Activated naive CD4-positive, alpha-beta T cell treated with anti-CD3 and anti-CD28 coated beads for 36 hours (primary cell): ENCODE measurements at regions of chr3 and their contacts with region 1.

Region 1: DNA sequence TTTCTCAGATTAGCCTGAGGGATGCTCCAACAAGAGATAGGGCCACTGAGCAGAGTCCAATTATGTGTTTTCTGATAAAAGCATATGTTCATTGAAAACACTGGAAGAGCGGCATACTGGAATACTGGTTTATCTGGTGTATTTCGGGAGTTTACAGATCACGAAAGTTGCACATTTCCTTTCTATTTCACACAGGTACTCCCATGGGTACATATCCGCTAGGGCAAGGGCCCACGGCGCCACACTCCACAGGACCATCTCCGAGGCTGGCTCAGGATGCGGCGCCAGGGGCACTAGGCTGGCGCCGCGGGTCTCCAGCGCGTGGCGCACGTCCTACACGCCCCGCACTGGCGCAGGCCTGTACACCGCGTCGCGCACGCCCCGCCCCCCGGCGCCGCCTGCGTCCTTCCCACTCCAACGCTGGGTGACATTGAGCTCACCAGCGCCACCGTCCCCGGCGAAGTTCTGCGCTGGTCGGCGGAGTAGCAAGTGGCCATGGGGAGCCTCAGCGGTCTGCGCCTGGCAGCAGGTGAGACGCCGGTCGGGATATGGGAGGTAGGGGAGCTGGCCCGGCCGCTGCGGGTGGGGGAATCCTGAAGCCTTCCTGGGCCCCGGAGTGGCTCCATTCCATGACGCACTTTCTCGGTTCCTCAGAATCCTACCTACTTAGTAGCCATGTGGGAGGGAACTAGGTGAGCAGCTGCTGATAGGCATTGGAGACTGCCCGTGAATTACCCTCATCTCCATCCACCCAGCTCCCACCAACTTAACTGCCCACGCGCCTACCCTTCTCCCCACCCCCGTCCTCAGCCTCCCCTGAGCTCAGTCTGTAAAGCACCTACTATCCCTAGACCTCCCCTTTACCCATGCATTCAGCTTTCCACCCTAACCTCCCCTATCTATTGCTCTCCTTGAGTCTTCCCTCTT is at the start of gene FAM162A:
- DNase-seq: peak; percentile 93
- H3K4me3 Mint-ChIP-seq: peak within 1 kb of the TSS; percentile 90
- H3K27ac Mint-ChIP-seq: peak within 1 kb of the TSS; percentile 93
- H3K4me1 Mint-ChIP-seq: peaks cover 62% of the 10 kb centered on the region
- H3K27me3 Mint-ChIP-seq: no peaks in the 10 kb centered on the region
- total RNA-seq, gene FAM162A: 111 to 112 TPM

Region 2: GRCh38 chr3:121749276-121750086 is 634.6 kb before region 1 on chr3 and contains the start of gene GOLGB1:
- CTCF ChIA-PET with region 1: no interaction called
- intact Hi-C with region 1: loop called (anchors 1 kb)
- DNase-seq: peak; percentile 97
- H3K4me3 Mint-ChIP-seq: no peak within 1 kb of the TSS
- H3K27ac Mint-ChIP-seq: no peak within 1 kb of the TSS
- H3K4me1 Mint-ChIP-seq: peaks cover 5% of the 10 kb centered on the region
- H3K27me3 Mint-ChIP-seq: no peaks in the 10 kb centered on the region
- total RNA-seq, gene GOLGB1: 18.2 to 19.7 TPM

Region 3: GRCh38 chr3:122305818-122306621 is 78.0 kb before region 1 on chr3:
- CTCF ChIA-PET with region 1: interaction called, 5 read pairs
- intact Hi-C with region 1: loop called (anchors 1 kb)
- DNase-seq: peak; percentile 32
- H3K4me3 Mint-ChIP-seq: no peak overlapping the region
- H3K27ac Mint-ChIP-seq: no peak overlapping the region
- H3K4me1 Mint-ChIP-seq: no peaks in the 10 kb centered on the region
- H3K27me3 Mint-ChIP-seq: peaks cover 1% of the 10 kb centered on the region

Region 4: DNA sequence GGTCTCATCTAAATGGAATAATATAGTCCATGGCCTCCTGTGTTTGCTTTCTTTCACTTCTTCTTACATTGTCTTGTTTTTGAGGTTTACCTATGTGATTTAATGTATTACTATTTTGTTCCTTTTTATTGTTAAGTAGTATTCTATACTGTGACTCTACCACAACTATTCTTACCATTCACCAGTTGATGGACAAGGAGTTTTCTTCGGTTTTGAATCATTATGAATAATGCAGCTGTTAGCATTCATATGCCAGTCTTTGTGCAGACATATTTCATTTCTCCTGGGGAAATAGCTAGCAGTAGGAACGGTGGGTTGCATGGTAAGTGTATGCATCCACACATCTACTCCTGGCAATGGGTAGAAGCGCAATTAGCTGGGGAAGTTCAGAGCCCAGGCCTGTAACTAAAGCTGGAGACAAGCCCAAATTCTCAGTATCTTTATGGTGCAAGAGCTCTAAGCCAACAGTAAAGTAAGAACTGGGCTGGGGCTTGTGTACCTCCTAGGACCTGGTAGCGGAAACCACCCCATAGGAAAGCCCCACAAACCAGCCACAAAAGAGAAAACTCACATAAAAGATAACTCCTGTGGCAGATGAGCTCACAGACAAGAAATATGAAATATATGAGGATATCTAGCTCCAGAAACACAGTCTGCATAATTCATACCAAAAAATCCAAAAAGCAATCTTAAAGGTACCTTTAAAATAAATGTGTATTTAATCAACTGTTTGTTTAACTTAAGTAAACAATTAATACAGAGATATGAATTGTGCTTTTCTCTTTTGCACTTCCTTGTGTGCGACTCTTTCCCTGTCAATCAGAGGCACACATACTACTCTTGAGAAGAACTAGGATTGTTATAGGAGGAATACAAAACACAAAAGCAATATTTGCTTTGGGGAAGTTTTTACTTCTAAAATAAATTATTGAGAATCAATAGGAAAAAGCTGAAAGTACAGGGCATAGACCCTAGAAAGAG is 61.6 kb before region 1 on chr3:
- CTCF ChIA-PET with region 1: no interaction called
- intact Hi-C with region 1: loop called (anchors 2 kb)
- DNase-seq: peak; percentile 73
- H3K4me3 Mint-ChIP-seq: no peak overlapping the region
- H3K27ac Mint-ChIP-seq: peak overlapping the region; percentile 77
- H3K4me1 Mint-ChIP-seq: peaks cover 22% of the 10 kb centered on the region
- H3K27me3 Mint-ChIP-seq: no peaks in the 10 kb centered on the region

Region 5: GRCh38 chr3:122365073-122365472 is 19.0 kb before region 1 on chr3:
- CTCF ChIA-PET with region 1: interaction called, 3 read pairs
- intact Hi-C with region 1: loop called (anchors 1 kb)
- DNase-seq: no peak
- H3K4me3 Mint-ChIP-seq: no peak overlapping the region
- H3K27ac Mint-ChIP-seq: peak overlapping the region; percentile 70
- H3K4me1 Mint-ChIP-seq: peaks cover 17% of the 10 kb centered on the region
- H3K27me3 Mint-ChIP-seq: no peaks in the 10 kb centered on the region

Region 6: GRCh38 chr3:122458992-122459391 is 75.0 kb after region 1 on chr3:
- CTCF ChIA-PET with region 1: no interaction called
- intact Hi-C with region 1: no loop called
- DNase-seq: no peak
- H3K4me3 Mint-ChIP-seq: no peak overlapping the region
- H3K27ac Mint-ChIP-seq: no peak overlapping the region
- H3K4me1 Mint-ChIP-seq: peaks cover 8% of the 10 kb centered on the region
- H3K27me3 Mint-ChIP-seq: no peaks in the 10 kb centered on the region

Region 7: GRCh38 chr3:122793568-122794416 is 409.8 kb after region 1 on chr3 and contains the start of gene HSPBAP1:
- CTCF ChIA-PET with region 1: no interaction called
- intact Hi-C with region 1: loop called (anchors 2 kb)
- DNase-seq: peak; percentile 92
- H3K4me3 Mint-ChIP-seq: peak within 1 kb of the TSS; percentile 86
- H3K27ac Mint-ChIP-seq: peak within 1 kb of the TSS; percentile 80
- H3K4me1 Mint-ChIP-seq: peaks cover 30% of the 10 kb centered on the region
- H3K27me3 Mint-ChIP-seq: no peaks in the 10 kb centered on the region
- total RNA-seq, gene HSPBAP1: 3.0 to 3.2 TPM

Region 8: GRCh38 chr3:123066896-123067688 is 683.1 kb after region 1 on chr3 and contains the start of gene PDIA5:
- CTCF ChIA-PET with region 1: no interaction called
- intact Hi-C with region 1: loop called (anchors 5 kb)
- DNase-seq: peak; percentile 83
- H3K4me3 Mint-ChIP-seq: peak within 1 kb of the TSS; percentile 81
- H3K27ac Mint-ChIP-seq: peak within 1 kb of the TSS; percentile 40
- H3K4me1 Mint-ChIP-seq: peaks cover 34% of the 10 kb centered on the region
- H3K27me3 Mint-ChIP-seq: no peaks in the 10 kb centered on the region
- total RNA-seq, gene PDIA5: 20.7 to 21.2 TPM